A673 (cell line): ENCODE measurements at regions of chr3 and their contacts with region 1.

Region 1: GRCh38 chr3:13884851-13885703 is 5.2 kb upstream of the WNT7A start:
- DNase-seq: no peak
- H3K4me3 ChIP-seq: no peak overlapping the region
- H3K27ac ChIP-seq: no peak overlapping the region
- H3K4me1 ChIP-seq: no peaks in the 10 kb centered on the region
- H3K27me3 ChIP-seq: peaks cover 41% of the 10 kb centered on the region
- CTCF ChIP-seq: peak; percentile 89

Region 2: GRCh38 chr3:13495921-13496723 is 389.0 kb before region 1 on chr3:
- CTCF ChIA-PET with region 1: interaction called, 6 read pairs
- POLR2A ChIA-PET with region 1: no interaction called
- intact Hi-C with region 1: loop called (anchors 10 kb)
- DNase-seq: peak; percentile 74
- H3K4me3 ChIP-seq: no peak overlapping the region
- H3K27ac ChIP-seq: no peak overlapping the region
- H3K4me1 ChIP-seq: no peaks in the 10 kb centered on the region
- H3K27me3 ChIP-seq: no peaks in the 10 kb centered on the region
- CTCF ChIP-seq: peak; percentile 86

Region 3: GRCh38 chr3:13648060-13649001 is 236.7 kb before region 1 on chr3:
- CTCF ChIA-PET with region 1: no interaction called
- POLR2A ChIA-PET with region 1: interaction called, 10 read pairs
- intact Hi-C with region 1: no loop called
- DNase-seq: peak; percentile 82
- H3K4me3 ChIP-seq: no peak overlapping the region
- H3K27ac ChIP-seq: no peak overlapping the region
- H3K4me1 ChIP-seq: peaks cover 7% of the 10 kb centered on the region
- H3K27me3 ChIP-seq: no peaks in the 10 kb centered on the region
- CTCF ChIP-seq: peak; percentile 98

Region 4: GRCh38 chr3:13657660-13658435 is 227.2 kb before region 1 on chr3:
- CTCF ChIA-PET with region 1: interaction called, 8 read pairs
- POLR2A ChIA-PET with region 1: no interaction called
- intact Hi-C with region 1: loop called (anchors 1 kb)
- DNase-seq: peak; percentile 58
- H3K4me3 ChIP-seq: no peak overlapping the region
- H3K27ac ChIP-seq: no peak overlapping the region
- H3K4me1 ChIP-seq: no peaks in the 10 kb centered on the region
- H3K27me3 ChIP-seq: peaks cover 29% of the 10 kb centered on the region
- CTCF ChIP-seq: peak; percentile 84